Activated naive CD4-positive, alpha-beta T cell treated with anti-CD3 and anti-CD28 coated beads, Interleukin-2, amount 10 ng/mL, durations not matched to agents 7 days and 5 days (primary cell): ENCODE measurements at regions of chr17 and their contacts with region 1.

Region 1: DNA sequence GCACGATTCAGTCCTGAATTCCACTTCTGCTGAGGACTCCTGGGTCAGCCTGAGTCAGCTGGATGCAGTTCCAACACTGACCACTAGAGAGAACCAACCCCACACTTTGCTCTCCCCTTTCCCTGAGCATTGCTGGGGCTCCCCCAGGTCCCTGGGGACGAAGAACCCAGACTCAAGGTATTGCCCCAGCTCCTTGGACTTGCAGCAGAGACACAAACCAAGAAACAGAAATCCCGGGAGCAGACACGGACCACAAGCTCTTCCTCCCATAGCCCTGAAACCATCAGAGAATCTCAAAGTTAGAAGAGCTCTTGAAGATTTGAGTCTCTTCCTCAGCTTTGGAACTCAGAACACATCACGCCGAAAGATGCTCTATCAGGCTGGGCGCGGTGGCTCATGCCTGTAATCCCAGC is 678 bp upstream of the GH1 start:
- DNase-seq: peak; percentile 83
- H3K4me3 Mint-ChIP-seq: no peak overlapping the region
- H3K27ac Mint-ChIP-seq: no peak overlapping the region
- H3K4me1 Mint-ChIP-seq: peaks cover 9% of the 10 kb centered on the region
- H3K27me3 Mint-ChIP-seq: peaks cover 61% of the 10 kb centered on the region

Region 2: GRCh38 chr17:63641692-63642448 is 277.4 kb before region 1 on chr17:
- CTCF ChIA-PET with region 1: no interaction called
- DNase-seq: no peak
- H3K4me3 Mint-ChIP-seq: no peak overlapping the region
- H3K27ac Mint-ChIP-seq: peak overlapping the region; percentile 15
- H3K4me1 Mint-ChIP-seq: peaks cover 11% of the 10 kb centered on the region
- H3K27me3 Mint-ChIP-seq: no peaks in the 10 kb centered on the region

Region 3: GRCh38 chr17:63931099-63931561 is 11.8 kb after region 1 on chr17:
- CTCF ChIA-PET with region 1: interaction called, 27 read pairs
- DNase-seq: peak; percentile 82
- H3K4me3 Mint-ChIP-seq: peak overlapping the region; percentile 93
- H3K27ac Mint-ChIP-seq: peak overlapping the region; percentile 84
- H3K4me1 Mint-ChIP-seq: peaks cover 32% of the 10 kb centered on the region
- H3K27me3 Mint-ChIP-seq: peaks cover 36% of the 10 kb centered on the region

Region 4: DNA sequence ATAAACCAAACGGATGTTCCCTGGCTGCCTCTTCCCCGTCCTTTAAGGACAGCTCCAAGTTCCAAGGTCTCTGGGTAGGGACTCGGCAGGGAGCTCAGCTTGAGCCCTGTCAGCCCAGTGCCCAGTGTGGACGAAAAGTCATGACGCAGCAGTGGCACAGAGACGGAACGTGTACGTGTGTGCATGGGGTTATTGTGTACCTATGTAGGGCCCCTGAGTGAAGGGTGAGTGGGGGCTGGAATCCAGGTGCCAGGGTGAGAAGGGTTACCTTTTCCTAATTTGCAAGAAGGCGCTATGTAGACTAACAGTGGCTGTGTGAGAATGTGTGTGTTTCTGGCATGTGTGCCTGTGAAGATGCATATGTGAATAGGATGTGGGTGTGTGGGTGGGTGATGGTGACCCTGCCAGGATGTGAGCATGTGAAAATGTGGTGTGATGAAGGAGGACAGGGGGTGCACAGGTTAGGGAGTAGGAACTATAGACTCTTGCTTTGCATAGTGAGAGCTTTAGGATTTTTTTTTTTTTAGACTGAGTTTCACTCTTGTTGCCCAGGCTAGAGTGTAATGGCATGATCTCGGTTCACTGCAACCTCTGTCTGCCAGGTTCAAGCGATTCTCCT is 47.4 kb after region 1 on chr17:
- CTCF ChIA-PET with region 1: interaction called, 10 read pairs
- DNase-seq: peak; percentile 54
- H3K4me3 Mint-ChIP-seq: no peak overlapping the region
- H3K27ac Mint-ChIP-seq: no peak overlapping the region
- H3K4me1 Mint-ChIP-seq: peaks cover 9% of the 10 kb centered on the region
- H3K27me3 Mint-ChIP-seq: peaks cover 33% of the 10 kb centered on the region

Region 5: DNA sequence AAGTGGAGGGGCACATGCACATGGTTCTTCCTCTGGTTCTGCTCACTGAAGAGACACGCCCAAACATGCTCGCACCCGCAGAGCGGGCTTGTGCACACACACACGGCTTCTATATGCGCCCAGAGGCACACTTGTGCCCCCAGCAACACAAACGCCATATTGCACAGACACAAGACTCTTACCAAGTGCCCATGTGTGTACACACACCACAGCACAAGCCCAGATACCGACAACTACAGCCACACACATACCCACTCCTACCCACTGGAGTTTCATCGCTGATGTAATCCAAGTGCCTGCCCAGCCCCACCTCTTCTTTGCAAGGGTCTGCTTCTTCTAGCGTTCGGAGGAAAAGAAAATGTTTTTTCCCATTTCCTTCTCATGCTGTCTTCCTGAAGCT is 72.3 kb after region 1 on chr17:
- CTCF ChIA-PET with region 1: interaction called, 83 read pairs
- DNase-seq: no peak
- H3K4me3 Mint-ChIP-seq: no peak overlapping the region
- H3K27ac Mint-ChIP-seq: no peak overlapping the region
- H3K4me1 Mint-ChIP-seq: peaks cover 63% of the 10 kb centered on the region
- H3K27me3 Mint-ChIP-seq: peaks cover 61% of the 10 kb centered on the region

Region 6: GRCh38 chr17:64020056-64020766 is 100.9 kb after region 1 on chr17 and contains the start of gene ICAM2:
- CTCF ChIA-PET with region 1: interaction called, 68 read pairs
- DNase-seq: peak; percentile 96
- H3K4me3 Mint-ChIP-seq: peak within 1 kb of the TSS; percentile 97
- H3K27ac Mint-ChIP-seq: peak within 1 kb of the TSS; percentile 100
- H3K4me1 Mint-ChIP-seq: peaks cover 72% of the 10 kb centered on the region
- H3K27me3 Mint-ChIP-seq: no peaks in the 10 kb centered on the region